IMR-90 (cell line): ENCODE measurements at regions of chr9 and their contacts with region 1.

Region 1: DNA sequence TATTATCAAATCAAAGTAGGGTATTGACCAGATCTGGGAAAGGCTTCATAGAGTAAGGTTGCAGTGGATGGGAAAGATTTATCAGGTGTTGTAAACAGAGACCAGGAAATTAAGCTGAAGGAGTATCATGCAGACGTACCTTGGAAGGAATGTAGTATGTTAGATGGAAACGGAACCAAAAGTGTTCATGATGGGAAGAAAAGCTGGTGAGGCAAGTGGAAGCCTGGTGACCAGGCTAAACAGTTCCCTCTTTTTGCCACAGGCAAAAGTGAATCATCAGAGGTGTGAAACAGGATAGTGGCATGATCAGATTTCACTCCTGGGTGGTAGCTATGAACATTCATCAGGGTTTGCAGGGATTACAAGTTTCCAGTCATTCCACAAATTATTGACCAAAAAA is 780.1 kb upstream of the DMAC1 start:
- DNase-seq: no peak
- ATAC-seq: no peak
- H3K4me3 ChIP-seq: no peak overlapping the region
- H3K27ac ChIP-seq: no peak overlapping the region
- H3K4me1 ChIP-seq: no peaks in the 10 kb centered on the region
- H3K27me3 ChIP-seq: no peaks in the 10 kb centered on the region
- CTCF ChIP-seq: no peak
- POLR2A ChIP-seq: no peak
- RAD21 ChIP-seq: no peak

Region 2: DNA sequence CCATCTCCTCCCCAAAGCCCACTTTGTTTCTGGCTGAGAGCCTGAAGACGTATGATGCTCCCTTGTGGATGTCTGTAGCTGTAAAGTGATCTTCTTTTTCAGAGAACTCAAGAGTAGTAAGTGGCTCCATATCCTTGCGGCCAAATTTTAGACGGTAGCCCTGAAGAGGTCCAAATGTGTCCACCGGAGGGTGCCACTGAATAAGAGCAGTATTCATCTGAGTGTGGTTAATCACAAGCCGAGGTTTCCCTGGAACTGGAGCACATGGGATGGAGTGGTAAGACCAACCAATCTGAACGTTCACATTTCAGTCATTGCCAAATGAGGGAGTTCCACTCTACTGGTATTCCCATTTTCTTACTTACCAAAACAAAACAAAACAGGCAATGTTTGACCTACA is 93.6 kb before region 1 on chr9:
- CTCF ChIA-PET with region 1: no interaction called
- POLR2A ChIA-PET with region 1: no interaction called
- dilution Hi-C with region 1: no loop called
- in situ Hi-C with region 1: no loop called
- intact Hi-C with region 1: no loop called
- DNase-seq: no peak
- ATAC-seq: no peak
- H3K4me3 ChIP-seq: no peak overlapping the region
- H3K27ac ChIP-seq: no peak overlapping the region
- H3K4me1 ChIP-seq: no peaks in the 10 kb centered on the region
- H3K27me3 ChIP-seq: no peaks in the 10 kb centered on the region
- CTCF ChIP-seq: no peak
- POLR2A ChIP-seq: no peak
- RAD21 ChIP-seq: no peak

Region 3: GRCh38 chr9:8605096-8605495 is 25.4 kb after region 1 on chr9:
- CTCF ChIA-PET with region 1: no interaction called
- POLR2A ChIA-PET with region 1: interaction called, 22 read pairs
- dilution Hi-C with region 1: no loop called
- in situ Hi-C with region 1: no loop called
- intact Hi-C with region 1: no loop called
- DNase-seq: no peak
- ATAC-seq: no peak
- H3K4me3 ChIP-seq: no peak overlapping the region
- H3K27ac ChIP-seq: no peak overlapping the region
- H3K4me1 ChIP-seq: no peaks in the 10 kb centered on the region
- H3K27me3 ChIP-seq: no peaks in the 10 kb centered on the region
- CTCF ChIP-seq: no peak
- POLR2A ChIP-seq: no peak
- RAD21 ChIP-seq: no peak